ENCODE measurements at regions of chr2 and their contacts with region 1.

Region 1: GRCh38 chr2:176088048-176088936 is 4.2 kb upstream of the HOXD13 start:
- DNase-seq: no peak
- H3K4me3 ChIP-seq: peak overlapping the region; percentile 24 to 51 (median 38)
- H3K27ac ChIP-seq: peak overlapping the region in 3 of 4 donors; percentile 92 to 96 (median 94)
- H3K4me1 ChIP-seq: peaks cover 0 to 55% (median 51%) of the 10 kb centered on the region in 4 donors
- H3K27me3 ChIP-seq: peaks cover 22 to 94% (median 22%) of the 10 kb centered on the region in 3 donors
- CTCF ChIP-seq: peak; percentile 77 to 83 (median 80)
- EP300 ChIP-seq: no peak
- POLR2A ChIP-seq: no peak

Region 2: DNA sequence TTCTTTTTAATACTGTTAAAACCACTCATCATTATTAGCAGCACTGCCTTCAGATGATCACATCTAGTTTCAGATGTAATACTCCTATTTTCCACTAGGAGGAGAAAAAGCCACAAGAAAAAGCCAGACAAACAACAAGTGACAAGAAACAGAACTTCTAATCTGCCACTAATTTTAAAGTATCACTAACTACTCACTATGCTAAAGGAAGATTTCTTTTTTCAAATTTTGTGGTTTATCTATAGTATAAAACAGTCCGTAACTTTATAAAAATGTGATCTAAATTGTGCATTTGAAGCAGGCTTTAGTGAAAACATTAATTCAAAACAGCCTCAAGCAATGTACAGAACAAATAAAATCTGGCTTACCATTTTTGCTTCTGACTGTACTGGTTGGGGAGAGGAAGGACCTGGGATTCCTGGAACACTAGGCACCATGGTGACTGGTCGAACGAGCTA is 977.1 kb before region 1 on chr2:
- intact Hi-C with region 1: loop called (anchors 5 kb)
- DNase-seq: no peak
- H3K4me3 ChIP-seq: no peak overlapping the region
- H3K27ac ChIP-seq: no peak overlapping the region
- H3K4me1 ChIP-seq: no peaks in the 10 kb centered on the region
- H3K27me3 ChIP-seq: no peaks in the 10 kb centered on the region
- CTCF ChIP-seq: peak in 3 of 4 experiments; percentile 55 to 73 (median 67)
- EP300 ChIP-seq: no peak
- POLR2A ChIP-seq: no peak

Region 3: GRCh38 chr2:175366815-175367214 is 721.5 kb before region 1 on chr2:
- intact Hi-C with region 1: loop called (anchors 2 kb)
- DNase-seq: no peak
- H3K4me3 ChIP-seq: no peak overlapping the region
- H3K27ac ChIP-seq: no peak overlapping the region
- H3K4me1 ChIP-seq: no peaks in the 10 kb centered on the region
- H3K27me3 ChIP-seq: peaks cover 0 to 3% (median 0%) of the 10 kb centered on the region in 3 donors
- CTCF ChIP-seq: peak; percentile 19 to 76 (median 68)
- EP300 ChIP-seq: no peak
- POLR2A ChIP-seq: no peak

Region 4: GRCh38 chr2:176110975-176111663 is 22.8 kb after region 1 on chr2:
- intact Hi-C with region 1: no loop called
- DNase-seq: no peak
- H3K4me3 ChIP-seq: peak overlapping the region in 2 of 4 donors; percentile 5 to 24
- H3K27ac ChIP-seq: peak overlapping the region in 3 of 4 donors; percentile 28 to 44 (median 41)
- H3K4me1 ChIP-seq: peaks cover 0 to 70% (median 42%) of the 10 kb centered on the region in 4 donors
- H3K27me3 ChIP-seq: peaks cover 0 to 73% (median 4%) of the 10 kb centered on the region in 3 donors
- CTCF ChIP-seq: peak; percentile 37 to 68 (median 59)
- EP300 ChIP-seq: no peak
- POLR2A ChIP-seq: no peak

Region 5: GRCh38 chr2:177306550-177306949 is 1218.3 kb after region 1 on chr2:
- intact Hi-C with region 1: no loop called
- DNase-seq: no peak
- H3K4me3 ChIP-seq: no peak overlapping the region
- H3K27ac ChIP-seq: no peak overlapping the region
- H3K4me1 ChIP-seq: no peaks in the 10 kb centered on the region
- H3K27me3 ChIP-seq: no peaks in the 10 kb centered on the region
- CTCF ChIP-seq: no peak
- EP300 ChIP-seq: no peak
- POLR2A ChIP-seq: no peak

Region 6: DNA sequence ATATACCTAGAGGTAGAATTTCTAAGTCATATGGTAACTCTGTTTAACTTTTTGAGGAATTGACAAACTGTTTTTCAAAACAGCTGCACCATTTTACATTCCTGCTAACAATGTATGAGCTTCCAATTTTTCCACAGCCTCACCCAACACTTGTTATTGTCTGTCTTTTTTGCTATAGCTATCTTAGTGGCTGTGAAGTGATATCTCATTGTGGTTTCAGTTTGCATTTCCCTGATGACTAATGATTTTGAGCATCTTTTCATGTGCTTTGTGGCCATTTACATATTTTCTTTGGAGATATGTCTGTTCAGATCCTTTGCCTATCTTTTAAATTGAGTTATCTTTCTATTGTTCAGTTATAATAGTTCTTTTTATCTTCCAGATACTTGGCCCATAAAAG is 1578.1 kb after region 1 on chr2:
- intact Hi-C with region 1: no loop called
- DNase-seq: no peak
- H3K4me3 ChIP-seq: no peak overlapping the region
- H3K27ac ChIP-seq: no peak overlapping the region
- H3K4me1 ChIP-seq: no peaks in the 10 kb centered on the region
- H3K27me3 ChIP-seq: no peaks in the 10 kb centered on the region
- CTCF ChIP-seq: no peak
- EP300 ChIP-seq: no peak
- POLR2A ChIP-seq: no peak

Measured in sigmoid colon (tissue), 7 donors.